ENCODE measurements at regions of chr5 and their contacts with region 1.

Region 1: DNA sequence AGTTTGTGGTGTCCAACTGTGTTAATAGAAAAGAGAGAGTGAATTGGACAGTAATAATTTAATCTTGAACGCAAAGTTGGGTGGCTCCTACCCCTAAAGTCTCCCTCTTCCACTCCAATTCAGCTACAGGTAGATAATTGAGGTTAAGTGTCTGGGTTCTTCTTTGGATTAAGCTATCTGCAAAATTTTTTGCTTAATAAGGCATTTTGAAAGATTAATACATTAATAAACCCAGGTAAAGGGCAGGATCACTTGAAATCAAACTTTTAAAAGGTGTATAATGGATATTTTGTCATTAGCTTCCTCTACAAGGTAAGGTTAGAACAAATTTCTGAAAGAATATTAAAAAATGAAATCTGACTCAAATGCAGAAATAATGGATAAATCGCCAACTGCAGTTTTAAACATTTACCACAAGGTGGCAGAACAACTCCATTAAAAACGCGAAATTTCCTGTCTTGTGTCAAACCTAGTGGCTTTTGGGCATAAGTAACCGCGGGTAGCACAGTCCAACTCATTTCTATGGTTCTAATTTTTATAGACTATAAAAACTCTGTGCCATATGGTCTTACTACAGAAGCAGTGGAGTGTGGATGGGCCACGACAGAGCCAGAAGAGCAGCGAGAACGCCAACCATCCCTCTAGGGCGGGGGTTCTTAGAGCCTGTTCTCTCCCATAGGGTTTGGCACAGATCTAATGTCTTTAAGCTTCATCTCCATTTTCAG is 276.5 kb downstream of the ARHGEF28 start:
- DNase-seq: no peak
- H3K4me3 Mint-ChIP-seq: no peak overlapping the region
- H3K27ac Mint-ChIP-seq: no peak overlapping the region
- H3K4me1 Mint-ChIP-seq: peaks cover 10% of the 10 kb centered on the region
- H3K27me3 Mint-ChIP-seq: peaks cover 37% of the 10 kb centered on the region

Region 2: DNA sequence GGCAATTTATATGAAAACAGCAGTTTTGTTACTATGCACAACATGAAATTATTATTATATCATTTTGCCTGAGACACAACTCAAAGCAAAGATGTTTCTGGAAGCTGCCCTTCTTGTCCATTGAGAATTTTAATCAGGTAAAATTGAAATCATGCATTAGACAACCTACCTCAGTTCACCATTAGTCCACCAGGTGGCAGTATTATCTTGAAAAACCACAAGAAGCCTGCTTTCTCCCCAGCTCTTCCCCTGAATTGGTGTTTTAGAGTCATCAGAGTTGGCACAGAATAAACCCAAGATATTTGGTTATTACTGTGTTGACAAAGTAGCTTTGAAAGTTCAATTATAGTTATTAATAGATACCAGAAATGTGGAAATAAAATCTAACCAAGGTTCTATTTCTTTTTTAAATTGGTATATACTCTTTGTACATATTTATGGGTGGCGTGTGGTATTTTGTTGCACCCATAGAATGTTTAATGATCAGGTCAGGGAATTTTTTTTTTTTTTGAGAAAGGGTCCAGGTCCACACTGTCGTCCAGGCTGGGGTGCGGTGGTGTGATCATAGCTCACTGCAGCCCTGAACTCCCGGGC is 311.3 kb before region 1 on chr5:
- CTCF ChIA-PET with region 1: interaction called, 3 read pairs
- POLR2A ChIA-PET with region 1: no interaction called
- intact Hi-C with region 1: loop called (anchors 10 kb)
- DNase-seq: peak; percentile 13
- H3K4me3 Mint-ChIP-seq: no peak overlapping the region
- H3K27ac Mint-ChIP-seq: no peak overlapping the region
- H3K4me1 Mint-ChIP-seq: no peaks in the 10 kb centered on the region
- H3K27me3 Mint-ChIP-seq: peaks cover 2% of the 10 kb centered on the region

Region 3: GRCh38 chr5:73928476-73928875 is 26.0 kb after region 1 on chr5:
- CTCF ChIA-PET with region 1: no interaction called
- POLR2A ChIA-PET with region 1: no interaction called
- intact Hi-C with region 1: no loop called
- DNase-seq: no peak
- H3K4me3 Mint-ChIP-seq: no peak overlapping the region
- H3K27ac Mint-ChIP-seq: no peak overlapping the region
- H3K4me1 Mint-ChIP-seq: no peaks in the 10 kb centered on the region
- H3K27me3 Mint-ChIP-seq: peaks cover 9% of the 10 kb centered on the region

Region 4: GRCh38 chr5:74316064-74316679 is 413.7 kb after region 1 on chr5:
- CTCF ChIA-PET with region 1: no interaction called
- POLR2A ChIA-PET with region 1: no interaction called
- intact Hi-C with region 1: loop called (anchors 2 kb)
- DNase-seq: peak; percentile 62
- H3K4me3 Mint-ChIP-seq: no peak overlapping the region
- H3K27ac Mint-ChIP-seq: no peak overlapping the region
- H3K4me1 Mint-ChIP-seq: peaks cover 24% of the 10 kb centered on the region
- H3K27me3 Mint-ChIP-seq: peaks cover 30% of the 10 kb centered on the region

Region 5: GRCh38 chr5:74648835-74649293 is 746.4 kb after region 1 on chr5:
- CTCF ChIA-PET with region 1: interaction called, 44 read pairs
- POLR2A ChIA-PET with region 1: no interaction called
- intact Hi-C with region 1: loop called (anchors 1 kb)
- DNase-seq: peak; percentile 37
- H3K4me3 Mint-ChIP-seq: no peak overlapping the region
- H3K27ac Mint-ChIP-seq: no peak overlapping the region
- H3K4me1 Mint-ChIP-seq: no peaks in the 10 kb centered on the region
- H3K27me3 Mint-ChIP-seq: peaks cover 11% of the 10 kb centered on the region

Region 6: GRCh38 chr5:74919487-74919886 is 1017.0 kb after region 1 on chr5:
- CTCF ChIA-PET with region 1: interaction called, 5 read pairs
- POLR2A ChIA-PET with region 1: no interaction called
- intact Hi-C with region 1: loop called (anchors 5 kb)
- DNase-seq: no peak
- H3K4me3 Mint-ChIP-seq: no peak overlapping the region
- H3K27ac Mint-ChIP-seq: no peak overlapping the region
- H3K4me1 Mint-ChIP-seq: no peaks in the 10 kb centered on the region
- H3K27me3 Mint-ChIP-seq: no peaks in the 10 kb centered on the region